ENCODE measurements at regions of chr3 and their contacts with region 1.

Region 1: GRCh38 chr3:132722164-132723024 is at the start of gene NPHP3:
- DNase-seq: peak; percentile 99
- H3K4me3 ChIP-seq: peak within 1 kb of the TSS; percentile 94
- H3K27ac ChIP-seq: peak within 1 kb of the TSS; percentile 98
- H3K4me1 ChIP-seq: peaks cover 5% of the 10 kb centered on the region
- H3K27me3 ChIP-seq: no peaks in the 10 kb centered on the region
- CTCF ChIP-seq: no peak
- total RNA-seq, gene NPHP3: 10.7 to 16.4 TPM

Region 2: DNA sequence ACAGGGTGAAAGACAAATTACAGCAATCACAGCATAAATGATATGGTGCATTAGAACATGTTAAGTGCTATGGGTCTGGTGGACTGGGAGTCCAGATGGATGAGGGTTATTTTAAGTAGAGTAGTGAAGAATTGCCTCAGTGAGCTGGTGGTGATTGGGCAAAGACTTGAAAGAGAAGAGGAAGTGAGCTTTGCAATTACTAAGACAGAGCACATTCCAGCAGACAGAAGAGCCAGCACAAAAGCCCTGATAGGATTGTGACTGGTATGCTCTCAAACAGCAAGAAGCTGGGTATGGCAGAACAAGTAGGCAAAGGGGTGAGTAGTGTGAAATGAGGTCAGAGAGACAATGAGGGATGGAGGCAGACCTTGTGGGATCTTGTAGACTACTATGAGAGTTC is 127.4 kb before region 1 on chr3:
- intact Hi-C with region 1: no loop called
- DNase-seq: no peak
- H3K4me3 ChIP-seq: no peak overlapping the region
- H3K27ac ChIP-seq: no peak overlapping the region
- H3K4me1 ChIP-seq: no peaks in the 10 kb centered on the region
- H3K27me3 ChIP-seq: no peaks in the 10 kb centered on the region
- CTCF ChIP-seq: no peak

Region 3: GRCh38 chr3:132879636-132880035 is 157.2 kb after region 1 on chr3:
- intact Hi-C with region 1: no loop called
- DNase-seq: no peak
- H3K4me3 ChIP-seq: no peak overlapping the region
- H3K27ac ChIP-seq: no peak overlapping the region
- H3K4me1 ChIP-seq: no peaks in the 10 kb centered on the region
- H3K27me3 ChIP-seq: no peaks in the 10 kb centered on the region
- CTCF ChIP-seq: no peak

Region 4: DNA sequence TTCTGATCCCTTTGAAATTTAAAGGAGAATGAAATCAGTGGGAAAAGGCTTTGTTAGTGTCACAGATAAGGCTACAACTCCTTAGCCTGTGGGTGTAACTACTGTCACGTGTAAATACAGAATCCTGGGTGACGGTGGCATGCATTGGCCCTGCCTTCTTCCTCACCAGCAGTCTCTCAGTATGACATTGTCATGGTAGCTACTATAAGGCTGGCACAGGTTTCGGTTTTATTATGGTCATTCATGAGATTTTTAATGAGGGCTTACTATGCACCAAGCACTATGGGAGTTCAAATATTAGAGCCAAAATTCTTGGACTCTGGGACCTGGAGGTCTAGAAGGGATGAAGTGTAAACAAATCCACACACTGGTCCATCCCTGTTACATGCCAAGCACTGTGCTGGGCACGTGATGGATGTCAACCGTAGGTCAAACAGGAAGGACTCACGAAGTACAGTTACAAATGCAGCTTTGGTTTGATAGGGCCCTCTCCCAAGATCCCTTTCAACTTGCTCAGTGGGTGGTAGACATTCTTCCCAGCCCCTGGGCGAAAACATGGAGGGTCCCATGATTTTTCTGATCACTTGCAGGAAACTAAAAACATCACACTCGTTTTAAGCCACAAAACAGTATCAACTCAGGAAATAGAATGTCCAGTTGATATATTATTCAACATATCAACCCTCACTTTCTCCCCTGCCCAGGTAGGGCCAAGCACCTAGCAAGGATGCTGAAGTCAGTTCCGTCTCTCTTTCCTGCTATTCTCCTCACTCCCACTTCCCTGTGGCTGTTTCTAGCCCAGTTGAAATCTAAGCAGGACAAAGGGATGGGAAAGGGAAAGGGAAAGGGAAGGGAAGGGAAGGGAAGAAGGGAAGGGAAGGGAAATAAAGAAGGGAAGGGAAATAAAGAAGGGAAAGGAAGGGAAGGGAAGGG is 702.8 kb after region 1 on chr3:
- intact Hi-C with region 1: loop called (anchors 5 kb)
- DNase-seq: no peak
- H3K4me3 ChIP-seq: no peak overlapping the region
- H3K27ac ChIP-seq: no peak overlapping the region
- H3K4me1 ChIP-seq: no peaks in the 10 kb centered on the region
- H3K27me3 ChIP-seq: no peaks in the 10 kb centered on the region
- CTCF ChIP-seq: no peak